ENCODE measurements at regions of chr3 and their contacts with region 1.

Region 1: GRCh38 chr3:106589311-106589942 is 720.6 kb upstream of the CBLB start:
- DNase-seq: no peak
- ATAC-seq: no peak
- H3K4me3 ChIP-seq: no peak overlapping the region
- H3K27ac ChIP-seq: no peak overlapping the region
- H3K4me1 ChIP-seq: no peaks in the 10 kb centered on the region
- H3K27me3 ChIP-seq: no peaks in the 10 kb centered on the region
- CTCF ChIP-seq: no peak
- EP300 ChIP-seq: no peak
- POLR2A ChIP-seq: no peak
- RAD21 ChIP-seq: no peak

Region 2: GRCh38 chr3:105722943-105723556 is 866.4 kb before region 1 on chr3:
- CTCF ChIA-PET with region 1: no interaction called
- POLR2A ChIA-PET with region 1: no interaction called
- in situ Hi-C with region 1: loop called (anchors 25 kb)
- intact Hi-C with region 1: no loop called
- DNase-seq: no peak
- ATAC-seq: no peak
- H3K4me3 ChIP-seq: no peak overlapping the region
- H3K27ac ChIP-seq: no peak overlapping the region
- H3K4me1 ChIP-seq: no peaks in the 10 kb centered on the region
- H3K27me3 ChIP-seq: no peaks in the 10 kb centered on the region
- CTCF ChIP-seq: no peak
- EP300 ChIP-seq: no peak
- POLR2A ChIP-seq: no peak
- RAD21 ChIP-seq: no peak

Region 3: GRCh38 chr3:106839576-106840280 is 250.3 kb after region 1 on chr3:
- CTCF ChIA-PET with region 1: no interaction called
- POLR2A ChIA-PET with region 1: no interaction called
- in situ Hi-C with region 1: no loop called
- intact Hi-C with region 1: no loop called
- DNase-seq: no peak
- ATAC-seq: no peak
- H3K4me3 ChIP-seq: no peak overlapping the region
- H3K27ac ChIP-seq: no peak overlapping the region
- H3K4me1 ChIP-seq: no peaks in the 10 kb centered on the region
- H3K27me3 ChIP-seq: no peaks in the 10 kb centered on the region
- CTCF ChIP-seq: no peak
- EP300 ChIP-seq: no peak
- POLR2A ChIP-seq: no peak
- RAD21 ChIP-seq: no peak